H1 (cell line): ENCODE measurements at regions of chr3 and their contacts with region 1.

Region 1: GRCh38 chr3:49839193-49839809 is 17.1 kb downstream of the TRAIP start:
- DNase-seq: peak; percentile 15 to 78
- H3K4me3 ChIP-seq: no peak overlapping the region
- H3K27ac ChIP-seq: 0 out of 2 replicates have a peak overlapping the region, but pooled peaks have one; percentile 3
- H3K4me1 ChIP-seq: peaks cover 0 to 6% (median 0%) of the 10 kb centered on the region in 4 experiments; a peak in 2 of 7 replicates
- H3K27me3 ChIP-seq: no peaks in the 10 kb centered on the region
- CTCF ChIP-seq: peak; percentile 82 to 91 (median 86)
- EP300 ChIP-seq: no peak
- POLR2A ChIP-seq: no peak
- RAD21 ChIP-seq: peak; percentile 85 to 86

Region 2: GRCh38 chr3:49703443-49703927 is 135.8 kb before region 1 on chr3:
- CTCF ChIA-PET with region 1: interaction called, 54 read pairs
- POLR2A ChIA-PET with region 1: no interaction called
- DNase-seq: peak in 1 of 2 experiments; percentile 76
- H3K4me3 ChIP-seq: no peak overlapping the region
- H3K27ac ChIP-seq: no peak overlapping the region
- H3K4me1 ChIP-seq: peaks cover 0 to 9% (median 5%) of the 10 kb centered on the region in 4 experiments; a peak in 5 of 7 replicates
- H3K27me3 ChIP-seq: no peaks in the 10 kb centered on the region
- CTCF ChIP-seq: peak in 2 of 3 experiments; percentile 87 to 97; a peak in 3 of 4 replicates
- EP300 ChIP-seq: no peak
- POLR2A ChIP-seq: no peak
- RAD21 ChIP-seq: peak; percentile 88 to 91

Region 3: DNA sequence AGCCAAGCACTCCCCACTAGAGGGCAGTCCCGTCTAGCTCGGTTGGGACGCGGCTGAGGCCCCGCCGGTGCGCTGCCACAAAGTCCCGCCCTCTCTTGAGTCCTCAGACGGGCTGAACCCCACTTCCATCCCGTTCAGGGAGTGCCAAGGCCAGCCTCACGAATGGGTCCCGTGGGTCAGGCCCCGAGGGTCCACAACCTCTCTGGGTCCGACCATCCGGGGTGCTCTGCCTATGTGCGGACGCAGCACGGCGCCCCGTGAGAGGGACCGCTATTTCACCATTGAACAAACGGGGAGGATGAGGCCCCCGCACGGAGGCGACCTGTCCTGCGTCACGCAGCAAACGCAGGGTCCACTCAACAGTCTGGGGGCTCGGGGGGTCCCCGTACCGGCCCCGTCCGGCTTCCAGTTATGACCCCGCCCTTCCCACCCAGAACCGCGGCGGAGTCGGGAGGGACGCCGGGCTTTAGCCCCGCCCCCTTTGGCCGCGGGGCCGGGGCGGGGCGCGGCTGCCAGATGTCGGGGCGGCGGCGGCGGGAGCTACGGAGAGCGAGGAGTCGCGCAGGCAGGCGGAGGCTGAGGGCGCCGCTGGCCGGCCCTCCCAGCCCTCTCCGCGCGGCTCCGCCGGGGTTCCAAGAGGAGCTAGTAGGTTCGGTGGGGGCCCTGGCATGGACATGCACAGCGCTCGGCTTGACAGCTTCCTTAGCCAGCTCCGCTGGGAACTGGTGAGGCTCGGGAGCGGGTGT is 36.4 kb before region 1 on chr3 and contains the start of gene INKA1:
- CTCF ChIA-PET with region 1: interaction called, 266 read pairs
- POLR2A ChIA-PET with region 1: interaction called, 8 read pairs
- DNase-seq: peak; percentile 62 to 94
- H3K4me3 ChIP-seq: peak within 1 kb of the TSS; percentile 24 to 89 (median 78)
- H3K27ac ChIP-seq: no peak within 1 kb of the TSS
- H3K4me1 ChIP-seq: peaks cover 0 to 25% (median 21%) of the 10 kb centered on the region in 4 experiments; a peak in 6 of 7 replicates
- H3K27me3 ChIP-seq: peaks cover 0 to 18% (median 16%) of the 10 kb centered on the region in 4 experiments; a peak in 6 of 7 replicates
- CTCF ChIP-seq: peak in 2 of 3 experiments; percentile 89 to 94; a peak in 3 of 4 replicates
- EP300 ChIP-seq: no peak
- POLR2A ChIP-seq: no peak
- RAD21 ChIP-seq: peak; percentile 86 to 91
- total RNA-seq, gene INKA1: 1.3 and 1.8 TPM in 2 replicates

Region 4: GRCh38 chr3:49856181-49857005 is 17.1 kb after region 1 on chr3 and contains the start of gene TRAIP:
- CTCF ChIA-PET with region 1: interaction called, 83 read pairs
- POLR2A ChIA-PET with region 1: interaction called, 5 read pairs
- DNase-seq: peak; percentile 83 to 99
- H3K4me3 ChIP-seq: peak within 1 kb of the TSS; percentile 79 to 96 (median 84)
- H3K27ac ChIP-seq: peak within 1 kb of the TSS; percentile 13; the same call in 1 of the 2 replicates
- H3K4me1 ChIP-seq: peaks cover 0 to 7% (median 4%) of the 10 kb centered on the region in 4 experiments; a peak in 6 of 7 replicates
- H3K27me3 ChIP-seq: no peaks in the 10 kb centered on the region
- CTCF ChIP-seq: no peak
- EP300 ChIP-seq: no peak
- POLR2A ChIP-seq: peak in 1 of 2 experiments; percentile 91; a peak in 2 of 3 replicates
- RAD21 ChIP-seq: peak; percentile 7 to 10; a peak in 2 of 4 replicates
- total RNA-seq, gene TRAIP: 25.4 and 28.1 TPM in 2 replicates

Region 5: DNA sequence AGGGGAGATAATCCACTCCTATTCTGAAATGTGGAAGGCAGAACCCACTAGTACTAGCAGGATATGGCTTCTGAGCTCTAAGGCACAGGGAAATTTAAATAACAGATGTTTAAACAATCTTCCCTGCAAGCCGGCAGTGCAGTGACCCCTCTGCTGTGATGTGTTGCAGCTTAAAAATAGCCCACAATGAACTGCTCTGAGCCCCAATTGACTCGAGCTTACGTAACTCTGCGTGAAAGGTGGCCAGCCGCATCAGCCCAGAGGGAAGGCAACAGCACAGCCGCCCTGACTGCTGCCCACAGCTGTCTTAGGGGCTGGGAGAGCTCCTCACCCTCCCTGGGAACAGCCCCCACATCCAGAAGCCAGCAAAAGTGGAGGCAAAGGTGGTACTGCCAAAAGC is 42.9 kb after region 1 on chr3:
- CTCF ChIA-PET with region 1: interaction called, 20 read pairs
- POLR2A ChIA-PET with region 1: interaction called, 4 read pairs
- DNase-seq: no peak
- H3K4me3 ChIP-seq: no peak overlapping the region
- H3K27ac ChIP-seq: no peak overlapping the region
- H3K4me1 ChIP-seq: peaks cover 10 to 22% (median 17%) of the 10 kb centered on the region in 4 experiments
- H3K27me3 ChIP-seq: no peaks in the 10 kb centered on the region
- CTCF ChIP-seq: no peak
- EP300 ChIP-seq: no peak
- POLR2A ChIP-seq: no peak
- RAD21 ChIP-seq: no peak

Region 6: DNA sequence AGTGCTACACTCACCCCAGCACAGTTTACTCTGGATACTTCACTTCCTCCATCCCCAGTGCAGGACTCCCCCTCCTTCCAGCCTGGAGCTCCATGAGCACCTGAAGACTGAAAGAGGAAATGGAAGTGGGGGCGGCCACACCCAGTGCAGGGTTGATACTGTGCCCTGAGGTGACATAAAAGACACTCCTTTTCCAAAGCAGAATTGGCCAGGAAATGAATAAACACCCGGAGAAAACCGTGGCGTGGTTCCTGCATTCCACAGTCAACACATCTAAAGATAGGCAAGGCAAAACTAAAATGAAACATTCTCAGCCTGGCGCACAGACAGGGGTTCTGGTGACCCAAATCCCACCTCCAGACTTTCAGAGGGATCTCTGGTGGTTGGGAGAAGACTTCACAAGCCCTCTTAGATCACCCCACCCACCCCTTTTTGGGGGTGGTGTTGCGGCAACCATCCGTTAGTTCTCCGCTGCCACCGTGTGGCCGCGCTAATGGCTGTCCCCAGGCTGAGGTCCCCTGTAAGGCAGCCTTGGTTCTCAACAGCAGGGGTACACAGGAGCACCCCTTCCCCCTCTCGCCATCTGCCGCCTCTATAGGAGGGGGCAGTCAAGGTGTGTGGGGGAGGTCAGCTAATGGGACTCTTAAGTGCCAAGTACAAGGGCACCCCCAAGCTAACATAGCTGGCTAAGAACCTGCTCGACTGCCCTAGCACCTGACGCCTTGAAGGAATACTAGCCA is 66.9 kb after region 1 on chr3:
- CTCF ChIA-PET with region 1: interaction called, 306 read pairs
- POLR2A ChIA-PET with region 1: interaction called, 5 read pairs
- DNase-seq: peak in 1 of 2 experiments; percentile 77
- H3K4me3 ChIP-seq: peak overlapping the region in 1 of 4 experiments; percentile 10; a peak in 1 of 8 replicates
- H3K27ac ChIP-seq: no peak overlapping the region
- H3K4me1 ChIP-seq: peaks cover 2 to 43% (median 26%) of the 10 kb centered on the region in 4 experiments
- H3K27me3 ChIP-seq: peaks cover 0 to 20% (median 16%) of the 10 kb centered on the region in 4 experiments; a peak in 5 of 7 replicates
- CTCF ChIP-seq: peak in 2 of 3 experiments; percentile 89 to 90; a peak in 3 of 4 replicates
- EP300 ChIP-seq: no peak
- POLR2A ChIP-seq: no peak
- RAD21 ChIP-seq: peak; percentile 80 to 85